AG04449 (cell line): ENCODE measurements at regions of chr15 and their contacts with region 1.

Region 1: DNA sequence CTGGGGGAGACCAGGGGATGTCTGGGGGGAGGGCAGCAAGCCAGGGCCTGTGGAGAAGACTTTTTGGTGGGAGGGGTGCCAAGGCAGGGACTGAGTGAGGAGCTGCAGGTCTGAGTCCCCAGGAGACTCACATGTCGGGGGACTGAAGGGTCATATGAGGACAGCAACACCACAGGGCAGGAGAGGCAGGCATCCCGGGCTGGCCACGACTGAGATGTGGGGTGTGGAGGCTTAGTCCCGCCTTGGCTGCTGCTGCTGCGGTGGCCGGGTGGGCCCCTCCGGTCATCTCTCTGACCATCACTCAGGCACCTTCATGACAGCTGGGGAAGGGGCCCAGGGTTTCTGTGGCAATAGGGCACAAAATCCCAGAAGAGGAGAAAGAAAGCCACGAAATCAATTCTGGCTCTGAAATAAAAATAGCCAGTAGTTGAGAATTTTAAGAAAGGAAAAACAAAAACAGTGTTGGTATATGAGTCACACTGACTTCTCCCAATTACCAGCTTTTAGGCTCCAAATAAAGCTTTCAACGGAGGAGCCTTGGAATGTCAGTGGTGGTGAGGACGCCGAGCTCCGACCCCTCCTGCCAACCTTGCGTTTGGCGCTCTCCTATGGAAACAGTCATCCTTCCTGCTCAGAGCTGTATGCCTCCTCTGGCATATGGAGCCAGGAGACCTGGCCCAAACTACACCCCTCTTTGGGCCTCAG is 52.9 kb upstream of the ITGA11 start:
- DNase-seq: peak; percentile 71
- H3K4me3 ChIP-seq: peak overlapping the region; percentile 18; the same call in 1 of the 2 replicates
- CTCF ChIP-seq: no peak

Region 2: DNA sequence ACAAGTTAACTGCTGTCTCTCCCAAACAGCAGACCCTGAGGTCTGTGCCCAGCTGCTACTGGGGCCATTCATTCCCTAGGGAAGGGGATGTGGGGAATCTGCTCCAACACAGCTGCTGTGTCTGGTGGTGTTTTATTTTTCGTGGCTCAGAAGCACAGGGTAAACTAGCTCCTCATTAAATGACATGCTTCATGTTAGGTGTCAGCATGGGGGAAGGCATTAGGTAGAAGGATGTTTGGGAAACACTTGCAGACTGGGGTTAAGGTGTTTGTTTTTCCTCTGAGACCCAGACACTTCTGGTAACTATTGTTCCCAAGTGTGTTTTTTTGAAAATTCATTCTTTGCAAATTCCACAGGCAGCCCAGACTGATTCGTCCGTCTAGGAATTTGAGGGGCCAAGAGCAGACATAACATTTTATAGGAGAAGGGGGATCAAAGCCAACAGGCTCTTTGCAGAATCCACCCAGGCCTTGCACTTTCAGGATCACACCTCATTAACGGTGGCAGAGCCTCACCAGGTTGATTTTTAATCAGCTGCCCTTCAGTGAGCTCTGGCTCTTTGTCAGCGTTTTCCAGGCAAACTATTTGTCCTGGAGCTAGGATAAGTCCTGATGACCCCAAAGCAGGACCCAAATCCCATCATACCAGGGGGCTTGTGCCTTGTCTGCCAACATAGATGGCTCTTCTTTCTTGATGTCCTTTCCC is 12.5 kb after region 1 on chr15:
- CTCF ChIA-PET with region 1: interaction called, 11 read pairs
- POLR2A ChIA-PET with region 1: interaction called, 5 read pairs
- DNase-seq: no peak
- H3K4me3 ChIP-seq: no peak overlapping the region
- CTCF ChIP-seq: no peak